ENCODE measurements at regions of chr1 and their contacts with region 1.

Region 1: DNA sequence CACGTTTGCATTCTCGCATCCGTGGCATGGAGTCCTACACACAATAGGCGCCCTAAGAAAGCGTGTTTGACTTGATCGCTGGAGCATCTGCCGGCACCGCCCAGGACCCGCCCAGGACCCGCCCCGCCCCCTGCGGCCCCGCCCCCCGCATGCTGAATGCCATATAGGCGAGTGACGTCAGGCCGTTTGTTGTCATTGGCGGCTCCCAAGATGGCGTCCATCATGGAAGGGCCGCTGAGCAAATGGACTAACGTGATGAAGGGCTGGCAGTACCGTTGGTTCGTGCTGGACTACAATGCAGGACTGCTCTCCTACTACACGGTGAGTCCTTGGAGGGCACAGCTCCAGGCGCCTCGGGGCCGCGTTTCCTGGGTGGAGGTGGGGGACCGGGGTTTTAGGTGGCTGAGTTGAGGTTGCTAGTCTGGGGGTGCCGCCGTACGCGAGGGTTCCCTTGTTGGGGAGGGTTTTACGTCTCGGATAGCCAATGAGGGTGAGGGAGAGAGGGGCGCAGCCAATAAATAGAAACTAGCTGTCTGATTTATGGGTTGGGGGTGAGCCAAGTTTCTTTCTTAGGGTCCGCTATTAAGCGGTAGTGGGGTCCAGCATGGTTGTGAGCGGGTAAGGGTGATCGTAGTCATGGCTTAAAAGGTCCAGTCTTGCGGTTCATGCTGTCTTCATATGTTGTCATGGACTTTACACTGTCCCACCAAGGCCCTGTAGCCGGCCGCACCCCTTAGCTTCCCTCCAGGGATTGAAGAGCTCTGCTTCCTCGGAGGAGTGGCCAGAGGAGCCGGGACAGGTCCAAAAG is at the start of gene OSBPL9:
- DNase-seq: peak; percentile 77 to 97 (median 88)

Region 2: GRCh38 chr1:51583532-51583931 is 33.6 kb before region 1 on chr1:
- intact Hi-C with region 1: loop called (anchors 5 kb)
- DNase-seq: peak; percentile 70 to 96 (median 83)